ENCODE measurements at regions of chr3 and their contacts with region 1.

Region 1: DNA sequence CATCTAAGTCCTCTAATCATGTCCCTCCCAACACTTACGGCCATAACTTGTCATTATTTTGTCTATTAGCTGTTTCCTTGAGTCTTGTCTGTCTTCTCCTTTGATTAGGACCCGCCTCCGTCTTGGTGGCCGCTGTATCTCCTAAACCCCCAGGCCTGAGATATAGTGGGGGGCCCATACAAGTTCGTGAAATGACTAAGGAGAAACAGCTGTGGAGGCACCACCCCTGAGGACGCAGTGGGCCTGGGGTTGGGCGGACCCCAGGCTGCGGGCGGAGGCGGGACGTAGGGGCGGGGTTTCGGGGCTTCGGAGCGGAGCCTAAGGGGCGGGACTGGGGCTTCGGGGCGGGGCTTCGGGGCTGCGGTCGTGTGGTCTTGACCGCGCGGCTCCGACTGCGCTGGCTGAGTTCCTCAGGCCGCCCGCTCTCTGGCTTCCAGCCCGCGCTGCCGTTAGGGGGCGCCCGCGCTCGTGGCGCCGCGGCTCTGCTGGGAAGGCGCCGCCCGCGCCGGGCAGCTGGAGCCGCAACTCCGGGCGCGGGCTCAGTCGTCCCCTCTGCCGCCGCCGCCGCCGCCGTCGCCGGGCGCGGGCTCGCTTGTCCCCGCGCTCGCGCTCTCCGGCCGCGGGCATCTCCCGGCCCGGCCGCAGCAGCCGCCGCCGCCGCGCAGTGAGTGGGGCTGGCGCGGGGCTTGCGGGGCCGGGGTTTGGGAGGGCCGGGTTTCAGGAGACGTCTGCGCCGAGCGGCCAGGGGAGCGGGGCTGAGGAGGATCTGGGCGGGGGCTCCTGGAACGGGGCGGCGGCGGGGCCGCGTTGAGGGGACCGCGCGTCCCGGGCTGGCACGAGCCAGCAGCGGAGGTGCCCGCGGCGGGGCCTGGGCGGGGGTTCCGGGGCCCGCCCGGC is at the start of gene KCTD6:
- DNase-seq: peak; percentile 88
- H3K4me3 ChIP-seq: peak within 1 kb of the TSS; percentile 48 to 66 (median 65)
- H3K27ac ChIP-seq: no peak within 1 kb of the TSS
- H3K4me1 ChIP-seq: peaks cover 19% of the 10 kb centered on the region
- H3K27me3 ChIP-seq: peaks cover 6% of the 10 kb centered on the region
- CTCF ChIP-seq: peak; percentile 48 to 66
- total RNA-seq, gene KCTD6: 2.7 to 5.6 TPM

Region 2: GRCh38 chr3:58324391-58325390 is 167.1 kb before region 1 on chr3:
- CTCF ChIA-PET with region 1: no interaction called
- dilution Hi-C with region 1: no loop called
- in situ Hi-C with region 1: no loop called
- intact Hi-C with region 1: no loop called
- DNase-seq: peak; percentile 19
- H3K4me3 ChIP-seq: no peak overlapping the region
- H3K27ac ChIP-seq: no peak overlapping the region
- H3K4me1 ChIP-seq: peaks cover 10% of the 10 kb centered on the region
- H3K27me3 ChIP-seq: no peaks in the 10 kb centered on the region
- CTCF ChIP-seq: no peak

Region 3: DNA sequence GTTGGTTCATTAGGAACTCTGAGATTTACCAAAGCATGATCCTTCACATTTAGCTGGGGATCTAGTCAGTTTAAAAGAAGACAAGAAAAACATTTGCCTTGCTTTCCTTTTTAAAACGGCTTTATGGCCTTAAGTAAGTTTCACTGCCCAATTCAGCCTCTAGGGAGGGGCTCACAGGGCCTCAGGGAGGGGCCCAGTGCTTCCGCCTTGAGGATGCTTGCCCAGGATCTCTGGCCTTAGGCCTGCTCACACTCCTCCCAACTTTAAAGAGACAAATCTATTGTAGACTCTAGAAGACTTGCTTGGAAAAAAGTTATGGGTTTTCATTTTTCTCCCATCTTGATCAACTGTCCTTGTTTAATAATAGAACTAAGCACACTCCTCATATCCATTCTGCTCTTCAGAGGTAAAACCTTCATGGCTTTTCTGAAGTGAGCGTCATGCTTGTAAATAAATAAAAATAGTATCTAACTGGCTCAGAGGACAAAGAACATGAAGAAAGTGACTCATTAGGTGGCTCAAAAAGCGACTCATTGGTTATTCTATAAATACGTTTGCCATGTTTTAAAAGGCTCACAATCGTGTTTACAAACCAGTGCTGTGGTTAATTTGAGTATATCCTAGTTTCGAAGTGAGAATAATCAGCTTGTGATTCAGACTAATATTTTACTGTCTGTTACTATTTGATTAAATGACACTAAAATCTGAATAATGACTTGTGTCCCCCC is 71.8 kb before region 1 on chr3:
- CTCF ChIA-PET with region 1: no interaction called
- dilution Hi-C with region 1: no loop called
- in situ Hi-C with region 1: no loop called
- intact Hi-C with region 1: no loop called
- DNase-seq: no peak
- H3K4me3 ChIP-seq: no peak overlapping the region
- H3K27ac ChIP-seq: no peak overlapping the region
- H3K4me1 ChIP-seq: no peaks in the 10 kb centered on the region
- H3K27me3 ChIP-seq: no peaks in the 10 kb centered on the region
- CTCF ChIP-seq: no peak

Region 4: GRCh38 chr3:58433400-58434169 is 58.2 kb before region 1 on chr3 and contains the start of gene PDHB:
- CTCF ChIA-PET with region 1: no interaction called
- dilution Hi-C with region 1: no loop called
- in situ Hi-C with region 1: no loop called
- intact Hi-C with region 1: loop called (anchors 5 kb)
- DNase-seq: peak; percentile 86
- H3K4me3 ChIP-seq: peak within 1 kb of the TSS; percentile 84 to 96 (median 92)
- H3K27ac ChIP-seq: peak within 1 kb of the TSS; percentile 55
- H3K4me1 ChIP-seq: peaks cover 21% of the 10 kb centered on the region
- H3K27me3 ChIP-seq: no peaks in the 10 kb centered on the region
- CTCF ChIP-seq: no peak
- total RNA-seq, gene PDHB: 43.2 to 44.9 TPM

Region 5: DNA sequence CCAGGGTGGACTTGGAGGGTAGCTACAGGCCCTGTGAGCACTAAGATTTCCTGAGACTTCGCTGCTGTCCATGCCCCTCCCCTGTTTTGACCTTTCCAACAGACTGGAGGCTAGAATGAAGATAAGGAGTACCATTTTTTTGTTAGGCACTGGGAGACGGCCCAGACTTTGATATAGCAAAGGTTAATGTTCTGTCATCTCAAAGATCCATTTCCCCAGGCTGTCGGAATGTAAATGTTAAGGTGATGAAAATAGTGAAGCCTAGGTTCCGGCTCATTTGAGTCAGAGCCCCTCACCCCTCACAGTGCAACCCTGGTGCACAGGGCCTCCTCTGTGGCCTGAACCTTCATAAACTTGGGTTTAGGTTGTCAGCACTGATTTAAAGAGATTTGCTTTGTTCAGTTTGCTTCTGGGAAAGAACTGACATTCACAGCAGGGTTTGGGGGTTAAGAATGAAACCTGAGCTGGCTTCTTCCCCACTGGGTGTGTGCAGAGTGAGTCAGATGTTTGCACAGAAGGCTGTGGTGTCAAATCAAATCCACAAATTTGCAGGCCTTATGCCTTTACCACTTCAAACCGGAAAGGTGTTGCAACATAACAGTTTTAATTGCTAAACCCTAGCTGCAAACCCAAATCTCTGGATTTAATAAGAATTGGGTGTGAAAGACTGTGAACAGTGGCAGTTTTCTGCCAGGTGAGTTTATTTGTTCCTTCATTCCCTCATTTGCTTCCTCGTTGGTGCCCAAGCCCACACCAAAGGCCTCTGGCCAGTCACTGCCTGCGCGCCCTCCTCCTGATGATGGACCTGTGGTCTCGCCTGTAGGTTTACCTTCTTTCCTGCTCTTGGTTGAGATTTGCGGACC is 20.5 kb before region 1 on chr3:
- CTCF ChIA-PET with region 1: no interaction called
- dilution Hi-C with region 1: no loop called
- in situ Hi-C with region 1: no loop called
- intact Hi-C with region 1: loop called (anchors 2 kb)
- DNase-seq: peak; percentile 90
- H3K4me3 ChIP-seq: no peak overlapping the region
- H3K27ac ChIP-seq: no peak overlapping the region
- H3K4me1 ChIP-seq: peaks cover 14% of the 10 kb centered on the region
- H3K27me3 ChIP-seq: peaks cover 15% of the 10 kb centered on the region
- CTCF ChIP-seq: no peak

Region 6: GRCh38 chr3:58532794-58533220 is 41.1 kb after region 1 on chr3:
- CTCF ChIA-PET with region 1: interaction called, 3 read pairs
- dilution Hi-C with region 1: loop called (anchors 5 kb)
- in situ Hi-C with region 1: no loop called
- intact Hi-C with region 1: loop called (anchors 1 kb)
- DNase-seq: peak; percentile 56
- H3K4me3 ChIP-seq: no peak overlapping the region
- H3K27ac ChIP-seq: no peak overlapping the region
- H3K4me1 ChIP-seq: peaks cover 21% of the 10 kb centered on the region
- H3K27me3 ChIP-seq: no peaks in the 10 kb centered on the region
- CTCF ChIP-seq: peak; percentile 83 to 97

Region 7: GRCh38 chr3:58659051-58659675 is 167.4 kb after region 1 on chr3:
- CTCF ChIA-PET with region 1: interaction called, 18 read pairs
- dilution Hi-C with region 1: no loop called
- in situ Hi-C with region 1: no loop called
- intact Hi-C with region 1: no loop called
- DNase-seq: peak; percentile 20
- H3K4me3 ChIP-seq: no peak overlapping the region
- H3K27ac ChIP-seq: no peak overlapping the region
- H3K4me1 ChIP-seq: no peaks in the 10 kb centered on the region
- H3K27me3 ChIP-seq: no peaks in the 10 kb centered on the region
- CTCF ChIP-seq: peak; percentile 30 to 41